H1 (cell line): ENCODE measurements at regions of chr2 and their contacts with region 1.

Region 1: GRCh38 chr2:238288650-238289573 is 502 bp upstream of the PER2 start:
- DNase-seq: peak; percentile 98
- H3K4me3 ChIP-seq: peak overlapping the region; percentile 72 to 84 (median 77)
- H3K27ac ChIP-seq: no peak overlapping the region
- H3K4me1 ChIP-seq: peaks cover 7 to 25% (median 18%) of the 10 kb centered on the region in 4 experiments
- H3K27me3 ChIP-seq: peaks cover 0 to 10% (median 2%) of the 10 kb centered on the region in 4 experiments; a peak in 2 of 7 replicates
- CTCF ChIP-seq: peak in 2 of 3 experiments; percentile 35 to 37; a peak in 2 of 4 replicates
- EP300 ChIP-seq: peak in 1 of 2 experiments; percentile 97; a peak in 2 of 3 replicates
- POLR2A ChIP-seq: no peak; a peak in 1 of 3 replicates
- RAD21 ChIP-seq: no peak

Region 2: GRCh38 chr2:238097998-238098871 is 190.7 kb before region 1 on chr2:
- CTCF ChIA-PET with region 1: no interaction called
- POLR2A ChIA-PET with region 1: no interaction called
- DNase-seq: peak; percentile 60 to 85
- H3K4me3 ChIP-seq: no peak overlapping the region
- H3K27ac ChIP-seq: peak overlapping the region; percentile 26; the same call in 1 of the 2 replicates
- H3K4me1 ChIP-seq: peaks cover 0 to 21% (median 13%) of the 10 kb centered on the region in 4 experiments; a peak in 6 of 7 replicates
- H3K27me3 ChIP-seq: no peaks in the 10 kb centered on the region
- CTCF ChIP-seq: no peak
- EP300 ChIP-seq: no peak
- POLR2A ChIP-seq: peak in 1 of 2 experiments; percentile 18; a peak in 1 of 3 replicates
- RAD21 ChIP-seq: no peak

Region 3: GRCh38 chr2:238220892-238221521 is 67.9 kb before region 1 on chr2:
- CTCF ChIA-PET with region 1: no interaction called
- POLR2A ChIA-PET with region 1: no interaction called
- DNase-seq: no peak
- H3K4me3 ChIP-seq: no peak overlapping the region
- H3K27ac ChIP-seq: no peak overlapping the region
- H3K4me1 ChIP-seq: peaks cover 0 to 4% (median 3%) of the 10 kb centered on the region in 4 experiments; a peak in 5 of 7 replicates
- H3K27me3 ChIP-seq: no peaks in the 10 kb centered on the region
- CTCF ChIP-seq: no peak
- EP300 ChIP-seq: no peak
- POLR2A ChIP-seq: no peak
- RAD21 ChIP-seq: no peak

Region 4: DNA sequence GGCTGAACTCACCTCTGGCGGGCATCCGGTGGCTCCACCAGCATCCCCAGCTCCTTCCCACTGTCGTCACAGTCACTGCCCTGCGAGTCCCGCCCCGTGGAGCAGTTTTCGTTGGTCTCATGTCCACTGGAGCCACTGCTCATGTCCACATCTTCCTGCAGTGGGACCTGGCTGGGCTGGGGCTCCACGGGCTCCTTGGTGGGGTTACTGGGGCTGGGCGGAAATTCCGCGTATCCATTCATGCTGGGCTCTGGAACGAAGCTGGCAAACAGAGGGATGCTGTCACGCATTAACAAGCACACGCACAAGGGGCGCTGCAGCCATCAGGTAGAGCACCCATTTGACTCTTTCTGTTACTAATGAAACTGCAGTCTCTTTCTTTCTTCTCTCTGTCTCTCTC is 11.2 kb before region 1 on chr2:
- CTCF ChIA-PET with region 1: interaction called, 32 read pairs
- POLR2A ChIA-PET with region 1: interaction called, 11 read pairs
- DNase-seq: peak in 1 of 2 experiments; percentile 66
- H3K4me3 ChIP-seq: no peak overlapping the region
- H3K27ac ChIP-seq: no peak overlapping the region
- H3K4me1 ChIP-seq: peaks cover 0 to 2% (median 0%) of the 10 kb centered on the region in 4 experiments; a peak in 1 of 7 replicates
- H3K27me3 ChIP-seq: no peaks in the 10 kb centered on the region
- CTCF ChIP-seq: peak; percentile 61 to 76 (median 73)
- EP300 ChIP-seq: no peak
- POLR2A ChIP-seq: no peak
- RAD21 ChIP-seq: peak; percentile 31 to 45

Region 5: GRCh38 chr2:238299803-238300202 is 10.9 kb after region 1 on chr2:
- CTCF ChIA-PET with region 1: interaction called, 40 read pairs
- POLR2A ChIA-PET with region 1: interaction called, 15 read pairs
- DNase-seq: no peak
- H3K4me3 ChIP-seq: no peak overlapping the region
- H3K27ac ChIP-seq: no peak overlapping the region
- H3K4me1 ChIP-seq: peaks cover 0 to 3% (median 0%) of the 10 kb centered on the region in 4 experiments; a peak in 1 of 7 replicates
- H3K27me3 ChIP-seq: peaks cover 0 to 2% (median 0%) of the 10 kb centered on the region in 4 experiments; a peak in 2 of 7 replicates
- CTCF ChIP-seq: no peak
- EP300 ChIP-seq: no peak
- POLR2A ChIP-seq: no peak
- RAD21 ChIP-seq: no peak